ENCODE measurements at regions of chr5 and their contacts with region 1.

Region 1: GRCh38 chr5:73792687-73793320 is 166.8 kb downstream of the ARHGEF28 start:
- ATAC-seq: peak; percentile 65 to 91 (median 80)
- H3K4me3 ChIP-seq: no peak overlapping the region
- H3K27ac ChIP-seq: no peak overlapping the region
- H3K4me1 ChIP-seq: peaks cover 7 to 11% of the 10 kb centered on the region in 2 donors

Region 2: GRCh38 chr5:73519531-73520283 is 273.1 kb before region 1 on chr5:
- in situ Hi-C with region 1: loop called in 1 of 9 experiments (anchors 25 kb)
- ATAC-seq: peak; percentile 63 to 99 (median 93)
- H3K4me3 ChIP-seq: no peak overlapping the region
- H3K27ac ChIP-seq: no peak overlapping the region
- H3K4me1 ChIP-seq: no peaks in the 10 kb centered on the region

Region 3: GRCh38 chr5:73582285-73583145 is 210.3 kb before region 1 on chr5:
- in situ Hi-C with region 1: loop called in 4 of 9 experiments (anchors 5 to 25 kb)
- ATAC-seq: peak in 3 of 8 experiments; percentile 71 to 73 (median 71)
- H3K4me3 ChIP-seq: no peak overlapping the region
- H3K27ac ChIP-seq: no peak overlapping the region
- H3K4me1 ChIP-seq: no peaks in the 10 kb centered on the region

Region 4: DNA sequence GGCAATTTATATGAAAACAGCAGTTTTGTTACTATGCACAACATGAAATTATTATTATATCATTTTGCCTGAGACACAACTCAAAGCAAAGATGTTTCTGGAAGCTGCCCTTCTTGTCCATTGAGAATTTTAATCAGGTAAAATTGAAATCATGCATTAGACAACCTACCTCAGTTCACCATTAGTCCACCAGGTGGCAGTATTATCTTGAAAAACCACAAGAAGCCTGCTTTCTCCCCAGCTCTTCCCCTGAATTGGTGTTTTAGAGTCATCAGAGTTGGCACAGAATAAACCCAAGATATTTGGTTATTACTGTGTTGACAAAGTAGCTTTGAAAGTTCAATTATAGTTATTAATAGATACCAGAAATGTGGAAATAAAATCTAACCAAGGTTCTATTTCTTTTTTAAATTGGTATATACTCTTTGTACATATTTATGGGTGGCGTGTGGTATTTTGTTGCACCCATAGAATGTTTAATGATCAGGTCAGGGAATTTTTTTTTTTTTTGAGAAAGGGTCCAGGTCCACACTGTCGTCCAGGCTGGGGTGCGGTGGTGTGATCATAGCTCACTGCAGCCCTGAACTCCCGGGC is 201.6 kb before region 1 on chr5:
- in situ Hi-C with region 1: loop called in 8 of 9 experiments (anchors 5 to 25 kb)
- ATAC-seq: peak in 6 of 8 experiments; percentile 47 to 84 (median 63)
- H3K4me3 ChIP-seq: no peak overlapping the region
- H3K27ac ChIP-seq: no peak overlapping the region
- H3K4me1 ChIP-seq: no peaks in the 10 kb centered on the region

Region 5: GRCh38 chr5:73654171-73654811 is 138.5 kb before region 1 on chr5:
- in situ Hi-C with region 1: loop called in 1 of 9 experiments (anchors 25 kb)
- ATAC-seq: peak in 4 of 8 experiments; percentile 9 to 79 (median 72)
- H3K4me3 ChIP-seq: no peak overlapping the region
- H3K27ac ChIP-seq: no peak overlapping the region
- H3K4me1 ChIP-seq: peaks cover 6% of the 10 kb centered on the region in 2 donors

Measured in motor neuron (in vitro differentiated cells).